A549 (cell line): ENCODE measurements at regions of chr17 and their contacts with region 1.

Region 1: GRCh38 chr17:79045842-79046196 is 21.9 kb downstream of the C1QTNF1 start:
- DNase-seq: peak; percentile 78 to 89
- ATAC-seq: peak; percentile 73 to 88
- H3K4me3 ChIP-seq: no peak overlapping the region
- H3K27ac ChIP-seq: no peak overlapping the region
- H3K4me1 ChIP-seq: peaks cover 6% of the 10 kb centered on the region; the same call in 2 of the 3 replicates
- CTCF ChIP-seq: peak; percentile 92
- EP300 ChIP-seq: no peak
- POLR2A ChIP-seq: no peak
- RAD21 ChIP-seq: peak; percentile 83

Region 2: GRCh38 chr17:78872486-78873115 is 173.2 kb before region 1 on chr17:
- CTCF ChIA-PET with region 1: no interaction called
- POLR2A ChIA-PET with region 1: no interaction called
- DNase-seq: peak in 1 of 2 experiments; percentile 69
- ATAC-seq: 0 out of 6 replicates have a peak, but pooled peaks of 1 of the 2 experiments have one; percentile 17
- H3K4me3 ChIP-seq: no peak overlapping the region
- H3K27ac ChIP-seq: no peak overlapping the region
- H3K4me1 ChIP-seq: peaks cover 42% of the 10 kb centered on the region
- CTCF ChIP-seq: no peak
- EP300 ChIP-seq: no peak
- POLR2A ChIP-seq: no peak
- RAD21 ChIP-seq: no peak

Region 3: GRCh38 chr17:78993241-78993956 is 52.4 kb before region 1 on chr17:
- CTCF ChIA-PET with region 1: interaction called, 32 read pairs
- POLR2A ChIA-PET with region 1: no interaction called
- DNase-seq: peak; percentile 69 to 78
- ATAC-seq: peak; percentile 64 to 87; a peak in 4 of 6 replicates
- H3K4me3 ChIP-seq: no peak overlapping the region
- H3K27ac ChIP-seq: no peak overlapping the region
- H3K4me1 ChIP-seq: no peaks in the 10 kb centered on the region; the same call in 2 of the 3 replicates
- CTCF ChIP-seq: peak; percentile 89
- EP300 ChIP-seq: no peak
- POLR2A ChIP-seq: no peak
- RAD21 ChIP-seq: peak; percentile 49 to 54

Region 4: GRCh38 chr17:79019632-79020584 is 25.9 kb before region 1 on chr17:
- CTCF ChIA-PET with region 1: interaction called, 376 read pairs
- POLR2A ChIA-PET with region 1: no interaction called
- DNase-seq: peak; percentile 71 to 82
- ATAC-seq: peak; percentile 48 to 62; a peak in 3 of 6 replicates
- H3K4me3 ChIP-seq: no peak overlapping the region
- H3K27ac ChIP-seq: peak overlapping the region; percentile 32 to 43; a peak in 4 of 6 replicates
- H3K4me1 ChIP-seq: peaks cover 15% of the 10 kb centered on the region
- CTCF ChIP-seq: peak; percentile 98
- EP300 ChIP-seq: no peak; a peak in 1 of 5 replicates
- POLR2A ChIP-seq: no peak
- RAD21 ChIP-seq: peak; percentile 91 to 96

Region 5: GRCh38 chr17:79065105-79065670 is 19.4 kb after region 1 on chr17:
- CTCF ChIA-PET with region 1: interaction called, 155 read pairs
- POLR2A ChIA-PET with region 1: no interaction called
- DNase-seq: peak; percentile 57 to 73
- ATAC-seq: peak; percentile 64 to 81; a peak in 5 of 6 replicates
- H3K4me3 ChIP-seq: no peak overlapping the region
- H3K27ac ChIP-seq: no peak overlapping the region
- H3K4me1 ChIP-seq: no peaks in the 10 kb centered on the region
- CTCF ChIP-seq: peak; percentile 80
- EP300 ChIP-seq: no peak
- POLR2A ChIP-seq: no peak
- RAD21 ChIP-seq: peak; percentile 69 to 76

Region 6: GRCh38 chr17:79382322-79382721 is 336.5 kb after region 1 on chr17:
- CTCF ChIA-PET with region 1: interaction called, 10 read pairs
- POLR2A ChIA-PET with region 1: no interaction called
- DNase-seq: no peak
- ATAC-seq: no peak
- H3K4me3 ChIP-seq: no peak overlapping the region
- H3K27ac ChIP-seq: no peak overlapping the region
- H3K4me1 ChIP-seq: no peaks in the 10 kb centered on the region
- CTCF ChIP-seq: no peak
- EP300 ChIP-seq: no peak
- POLR2A ChIP-seq: no peak
- RAD21 ChIP-seq: no peak